GM10248 (cell line): ENCODE measurements at regions of chr12 and their contacts with region 1.

Region 1: GRCh38 chr12:50084775-50085614 is at the start of gene SMARCD1:
- DNase-seq: peak; percentile 94
- CTCF ChIP-seq: peak; percentile 78

Region 2: GRCh38 chr12:50066433-50066832 is 18.6 kb before region 1 on chr12:
- CTCF ChIA-PET with region 1: interaction called, 22 read pairs
- POLR2A ChIA-PET with region 1: no interaction called
- DNase-seq: no peak
- CTCF ChIP-seq: no peak

Region 3: DNA sequence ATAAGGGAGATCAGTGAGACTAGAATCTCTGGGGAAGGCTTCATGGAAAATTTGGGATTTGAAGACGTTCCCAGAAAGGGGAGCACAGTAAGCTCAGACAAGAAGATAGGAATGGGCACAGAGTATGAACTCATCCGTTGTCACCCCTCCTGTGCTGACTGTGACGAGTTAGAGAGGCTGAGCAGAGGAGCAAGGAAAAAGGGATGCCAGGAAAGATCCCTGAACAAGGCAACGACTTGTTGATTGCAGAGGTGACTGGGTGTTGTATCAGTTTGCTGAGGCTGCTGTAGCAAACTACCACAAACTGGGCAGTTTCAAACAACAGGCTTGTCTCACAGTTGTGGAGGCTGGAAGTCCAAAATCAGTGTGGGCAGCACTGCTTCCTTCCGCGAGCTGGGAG is 13.0 kb after region 1 on chr12:
- CTCF ChIA-PET with region 1: interaction called, 34 read pairs
- POLR2A ChIA-PET with region 1: interaction called, 3 read pairs
- DNase-seq: no peak
- CTCF ChIP-seq: no peak

Region 4: DNA sequence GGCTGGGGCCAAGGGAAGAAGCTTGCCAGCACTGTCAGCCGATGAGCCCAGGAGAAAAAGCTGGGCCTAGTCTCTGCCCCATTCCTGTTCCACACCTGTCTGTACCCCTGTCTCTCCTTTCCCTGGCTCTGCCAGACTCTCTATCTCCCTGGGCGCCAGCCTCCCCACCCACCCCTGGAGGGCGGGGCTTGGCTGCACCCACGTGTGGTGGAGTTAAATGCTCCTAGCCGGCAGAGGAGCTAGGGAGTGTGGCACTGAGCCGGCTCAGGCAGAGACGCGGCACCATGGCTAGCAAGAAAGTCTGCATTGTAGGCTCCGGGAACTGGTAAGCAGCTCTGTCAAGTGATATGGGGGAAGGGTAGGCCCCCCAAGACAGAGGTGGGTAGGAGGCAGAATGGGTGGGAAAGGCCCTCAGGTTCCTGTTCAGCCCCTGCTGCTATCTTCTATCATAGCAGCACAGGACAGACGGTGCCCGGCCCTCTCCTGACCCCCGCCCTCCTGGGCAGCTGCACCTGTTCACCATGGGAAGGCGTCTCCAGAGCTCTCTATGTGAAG is 18.8 kb after region 1 on chr12 and contains the start of gene GPD1:
- CTCF ChIA-PET with region 1: interaction called, 113 read pairs
- POLR2A ChIA-PET with region 1: no interaction called
- DNase-seq: no peak
- CTCF ChIP-seq: no peak

Region 5: DNA sequence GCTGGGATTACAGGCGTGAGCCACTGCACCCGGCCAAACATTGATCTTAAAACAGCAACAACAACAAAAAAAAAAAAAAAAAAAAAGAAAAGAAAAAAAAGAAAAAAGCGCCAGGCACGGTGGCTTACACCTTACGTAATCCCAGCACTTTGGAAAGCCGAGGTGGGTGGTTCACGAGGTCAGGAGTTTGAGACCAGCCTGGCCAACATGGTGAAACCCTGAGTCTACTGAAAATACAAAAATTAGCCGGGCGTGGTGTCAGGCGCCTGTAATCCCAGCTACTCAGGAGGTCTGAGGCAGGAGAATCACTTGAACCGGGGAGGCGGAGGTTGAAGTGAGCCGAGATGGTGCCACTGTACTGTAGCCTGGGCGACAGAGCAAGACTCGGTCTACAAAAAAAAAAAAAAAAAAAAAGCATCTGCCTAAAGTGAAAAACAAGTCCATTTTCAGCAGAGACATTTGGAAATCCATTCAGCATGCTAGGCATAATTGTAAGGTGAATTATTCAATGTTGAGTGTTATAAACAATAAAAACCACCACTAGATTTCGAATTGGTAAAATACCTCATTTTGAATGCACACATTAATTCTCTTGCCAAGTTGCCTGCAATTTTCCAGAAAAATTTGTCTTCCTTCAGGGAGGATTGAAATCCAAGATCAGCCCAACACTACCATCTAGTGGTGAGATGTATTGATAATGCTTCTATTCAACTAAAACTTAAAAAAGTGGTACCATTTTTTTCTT is 90.1 kb after region 1 on chr12:
- CTCF ChIA-PET with region 1: interaction called, 23 read pairs
- POLR2A ChIA-PET with region 1: no interaction called
- DNase-seq: peak; percentile 39
- CTCF ChIP-seq: peak; percentile 38